ENCODE measurements at regions of chr5 and their contacts with region 1.

Region 1: GRCh38 chr5:171392585-171393159 is 5.0 kb downstream of the NPM1 start:
- DNase-seq: no peak
- H3K4me3 ChIP-seq: no peak overlapping the region
- H3K27ac ChIP-seq: no peak overlapping the region
- H3K4me1 ChIP-seq: peaks cover 42% of the 10 kb centered on the region
- H3K27me3 ChIP-seq: no peaks in the 10 kb centered on the region
- CTCF ChIP-seq: no peak

Region 2: DNA sequence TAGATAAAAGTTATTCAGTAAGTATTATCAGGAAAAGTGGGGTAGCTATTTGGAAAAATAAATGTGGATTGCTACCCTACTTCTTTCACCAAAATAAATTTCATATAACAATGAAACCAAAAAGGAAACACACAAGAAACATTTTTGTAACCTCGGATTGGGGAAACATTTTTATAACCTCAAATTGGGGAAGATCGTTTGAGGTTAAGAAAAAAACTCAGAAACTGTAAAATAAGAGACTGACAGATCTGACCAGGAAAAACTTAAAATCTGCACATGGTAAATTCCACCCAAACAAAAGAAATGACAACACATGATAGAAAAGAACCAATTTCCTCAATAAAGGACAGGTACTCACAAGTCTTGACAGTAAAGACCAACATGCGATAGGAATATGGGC is 814.8 kb after region 1 on chr5:
- CTCF ChIA-PET with region 1: no interaction called
- POLR2A ChIA-PET with region 1: interaction called, 14 read pairs
- intact Hi-C with region 1: no loop called
- DNase-seq: no peak
- H3K4me3 ChIP-seq: no peak overlapping the region
- H3K27ac ChIP-seq: no peak overlapping the region
- H3K4me1 ChIP-seq: no peaks in the 10 kb centered on the region
- H3K27me3 ChIP-seq: no peaks in the 10 kb centered on the region
- CTCF ChIP-seq: no peak